ENCODE measurements at regions of chr19 and their contacts with region 1.

Region 1: GRCh38 chr19:18291590-18292461 is 10.4 kb upstream of the JUND start:
- DNase-seq: peak; percentile 93 to 94 (median 93)
- ATAC-seq: peak; percentile 71 to 85 (median 82)
- H3K4me3 ChIP-seq: peak overlapping the region; percentile 64 to 98 (median 77)
- H3K27ac ChIP-seq: peak overlapping the region; percentile 96 to 100 (median 99)
- H3K4me1 ChIP-seq: peaks cover 0 to 43% (median 22%) of the 10 kb centered on the region in 12 donors
- H3K27me3 ChIP-seq: no peaks in the 10 kb centered on the region
- CTCF ChIP-seq: peak in 2 of 12 donors; percentile 2
- POLR2A ChIP-seq: peak in 1 of 2 donors; percentile 54

Region 2: DNA sequence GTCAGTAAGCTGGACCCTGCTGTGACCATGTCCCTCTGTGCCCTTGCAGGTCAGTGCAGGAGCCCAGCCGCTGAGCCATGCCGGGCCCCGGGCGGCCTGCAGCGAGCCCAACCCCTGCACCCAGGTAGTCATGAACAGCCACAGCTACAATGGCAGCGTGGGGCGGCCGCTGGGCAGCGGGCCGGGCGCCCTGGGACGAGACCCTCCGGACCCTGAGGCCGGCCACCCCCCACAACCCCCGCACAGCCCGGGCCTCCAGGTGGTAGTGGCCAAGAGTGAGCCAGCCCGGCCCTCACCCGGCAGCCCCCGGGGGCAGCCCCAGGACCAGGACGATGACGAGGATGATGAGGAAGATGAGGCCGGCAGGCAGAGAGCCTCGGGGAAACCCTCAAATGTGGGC is 318.1 kb before region 1 on chr19:
- intact Hi-C with region 1: no loop called
- DNase-seq: no peak
- ATAC-seq: peak in 1 of 4 donors; percentile 23
- H3K4me3 ChIP-seq: no peak overlapping the region
- H3K27ac ChIP-seq: no peak overlapping the region
- H3K4me1 ChIP-seq: no peaks in the 10 kb centered on the region
- H3K27me3 ChIP-seq: peaks cover 0 to 25% (median 0%) of the 10 kb centered on the region in 9 donors
- CTCF ChIP-seq: no peak
- POLR2A ChIP-seq: no peak

Region 3: DNA sequence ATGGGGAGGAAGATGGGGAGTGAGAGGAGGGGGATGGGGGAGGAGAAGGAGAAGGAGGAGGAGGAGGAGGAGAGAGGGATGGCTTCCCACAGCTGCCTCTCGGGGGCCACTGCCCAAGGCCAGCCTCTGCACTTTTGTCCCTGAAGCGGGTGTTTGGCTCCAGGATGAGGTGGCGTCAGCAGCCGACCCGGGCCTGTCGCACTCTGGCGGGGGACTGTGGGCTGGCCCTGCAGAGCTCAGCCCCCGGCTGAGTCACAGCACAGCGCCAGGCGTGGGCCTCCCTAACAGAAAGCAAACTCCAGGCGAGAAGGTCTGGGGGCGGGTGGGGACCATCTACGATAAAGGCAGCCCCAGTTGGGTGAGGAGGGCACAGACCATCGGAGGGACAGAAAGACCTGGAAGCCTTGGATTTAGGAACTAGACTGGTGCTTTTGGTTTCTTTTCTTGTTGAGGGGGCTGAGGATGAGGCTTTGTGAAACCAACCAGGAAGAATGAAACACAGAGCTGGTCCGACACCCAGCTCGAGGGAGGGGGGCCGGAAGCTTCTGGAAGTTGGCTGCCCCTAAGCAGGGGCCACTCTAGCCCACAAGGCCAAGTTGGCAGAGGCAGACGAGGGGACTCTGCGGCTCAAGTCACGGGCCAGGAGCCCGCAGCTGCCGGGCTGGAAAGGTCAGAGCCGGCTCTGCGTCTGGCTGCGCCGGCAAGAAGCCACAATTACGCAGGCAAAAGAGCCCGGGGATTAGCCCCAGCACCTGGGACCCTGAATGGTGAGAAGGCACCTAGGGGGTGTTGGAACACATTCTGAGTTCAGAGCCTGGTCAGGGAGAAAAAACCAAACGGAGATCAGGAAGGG is 12.9 kb after region 1 on chr19:
- intact Hi-C with region 1: loop called in 1 of 10 experiments (anchors 1 kb)
- DNase-seq: peak; percentile 89 to 95 (median 93)
- ATAC-seq: peak; percentile 76 to 89 (median 84)
- H3K4me3 ChIP-seq: peak overlapping the region in 11 of 12 donors; percentile 13 to 62 (median 46)
- H3K27ac ChIP-seq: peak overlapping the region; percentile 89 to 100 (median 98)
- H3K4me1 ChIP-seq: peaks cover 18 to 75% (median 54%) of the 10 kb centered on the region in 12 donors
- H3K27me3 ChIP-seq: no peaks in the 10 kb centered on the region
- CTCF ChIP-seq: peak in 2 of 12 donors; percentile 12 to 21
- POLR2A ChIP-seq: peak in 1 of 2 donors; percentile 76

Measured in heart left ventricle (tissue), 16 donors.